ENCODE measurements at regions of chr10 and their contacts with region 1.

Region 1: GRCh38 chr10:73413528-73414229 is at the start of gene ANXA7:
- H3K4me3 ChIP-seq: peak within 1 kb of the TSS; percentile 99
- H3K27ac ChIP-seq: peak within 1 kb of the TSS; percentile 83
- H3K4me1 ChIP-seq: no peaks in the 10 kb centered on the region
- CTCF ChIP-seq: peak; percentile 83

Region 2: DNA sequence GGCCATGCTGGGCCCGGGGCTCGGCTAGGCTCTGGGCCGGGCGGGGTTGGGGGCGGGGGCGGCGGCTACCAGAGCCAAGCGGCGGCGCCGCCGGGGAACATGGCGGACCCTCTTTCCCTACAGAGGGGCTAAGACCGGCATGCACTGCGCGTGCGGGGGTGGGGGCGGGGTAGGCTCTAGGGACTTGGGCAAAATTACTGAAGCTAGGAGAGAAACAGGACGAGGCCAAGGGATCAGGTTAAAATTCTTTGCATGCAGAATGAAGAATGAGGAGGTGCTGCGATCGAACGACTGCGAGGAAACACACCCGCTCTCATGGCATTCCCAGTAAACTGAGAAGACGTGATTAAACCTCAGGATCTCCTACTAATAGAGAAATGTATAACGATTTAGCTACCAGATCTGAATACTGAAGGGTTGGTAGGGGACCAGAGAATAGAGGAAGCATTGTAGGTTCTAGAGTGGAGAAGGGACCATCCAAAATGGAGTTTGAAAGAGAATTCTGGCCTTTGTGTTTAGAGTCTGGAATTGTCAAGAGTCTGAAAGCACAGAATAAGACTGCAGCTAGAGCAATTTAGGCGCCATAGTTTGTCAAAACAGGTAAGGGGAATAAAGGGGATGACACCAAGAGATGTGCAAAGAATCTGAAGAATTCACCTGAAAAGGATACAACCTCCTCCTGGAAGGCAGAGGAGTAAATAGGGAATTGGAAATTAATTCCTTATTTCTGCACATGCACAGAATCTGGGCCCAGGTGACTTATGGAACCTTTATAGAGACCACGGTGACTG is 82.4 kb after region 1 on chr10 and contains the start of gene PPP3CB:
- CTCF ChIA-PET with region 1: no interaction called
- POLR2A ChIA-PET with region 1: interaction called, 15 read pairs
- H3K4me3 ChIP-seq: peak within 1 kb of the TSS; percentile 81
- H3K27ac ChIP-seq: peak within 1 kb of the TSS; percentile 93
- H3K4me1 ChIP-seq: peaks cover 11% of the 10 kb centered on the region; the same call in 1 of the 2 replicates
- CTCF ChIP-seq: no peak

Measured in HEK293 (cell line).